ENCODE measurements at regions of chr15 and their contacts with region 1.

Region 1: GRCh38 chr15:45634442-45635190 is at the start of gene SQOR:
- DNase-seq: peak; percentile 89 to 95
- H3K4me3 ChIP-seq: peak within 1 kb of the TSS; percentile 70 to 86
- H3K27ac ChIP-seq: peak within 1 kb of the TSS; percentile 93 to 96
- H3K4me1 ChIP-seq: peaks cover 5 to 54% (median 32%) of the 10 kb centered on the region in 4 donors
- H3K27me3 ChIP-seq: no peaks in the 10 kb centered on the region
- CTCF ChIP-seq: no peak

Region 2: DNA sequence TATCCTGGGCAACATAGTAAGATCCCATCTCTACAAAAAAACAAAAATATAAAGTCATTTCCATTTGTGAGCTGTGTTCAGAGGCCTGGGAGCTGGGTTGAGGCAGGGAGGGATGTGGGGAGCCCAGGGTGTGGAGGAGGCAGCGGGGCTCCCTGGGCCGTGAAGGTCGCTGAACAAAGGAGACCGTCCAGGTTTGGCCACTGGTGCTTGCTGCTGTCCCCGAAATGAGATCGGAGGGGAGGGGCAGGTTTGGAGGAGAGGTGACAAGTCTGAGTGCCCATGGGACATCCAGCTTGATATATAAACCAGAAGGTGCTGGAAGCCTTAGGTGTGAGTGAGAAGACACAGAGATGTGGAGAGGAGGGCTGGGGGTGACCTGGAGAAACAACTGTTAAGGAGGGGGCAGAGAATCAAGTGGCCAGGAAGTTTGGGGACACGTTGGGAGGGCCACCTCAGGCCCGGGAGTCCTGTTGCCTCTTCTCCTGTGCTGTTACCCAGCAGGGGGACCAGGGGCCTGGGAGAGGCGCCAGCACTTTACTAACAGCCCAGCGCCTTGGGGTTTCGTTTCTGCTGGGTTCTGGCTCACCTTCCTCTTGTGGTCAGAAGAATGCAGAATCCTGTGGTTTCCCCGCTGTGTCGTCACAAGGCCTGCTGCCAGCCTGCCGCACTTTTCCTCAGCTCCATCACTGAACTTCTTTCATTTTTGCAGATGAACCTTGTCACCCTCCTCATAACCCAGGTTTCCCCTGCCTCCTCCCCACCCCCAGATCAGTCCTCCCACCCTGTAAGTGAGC is 180.0 kb before region 1 on chr15:
- intact Hi-C with region 1: no loop called
- DNase-seq: peak in 1 of 2 donors; percentile 44
- H3K4me3 ChIP-seq: no peak overlapping the region
- H3K27ac ChIP-seq: no peak overlapping the region
- H3K4me1 ChIP-seq: peaks cover 0 to 18% (median 0%) of the 10 kb centered on the region in 4 donors
- H3K27me3 ChIP-seq: peaks cover 0 to 6% of the 10 kb centered on the region in 2 donors
- CTCF ChIP-seq: no peak

Region 3: GRCh38 chr15:45587095-45587860 is 47.3 kb before region 1 on chr15 and contains the start of gene BLOC1S6:
- intact Hi-C with region 1: loop called (anchors 5 kb)
- DNase-seq: peak; percentile 86 to 93
- H3K4me3 ChIP-seq: peak within 1 kb of the TSS; percentile 72 to 75
- H3K27ac ChIP-seq: peak within 1 kb of the TSS; percentile 92 to 96
- H3K4me1 ChIP-seq: peaks cover 0 to 45% (median 24%) of the 10 kb centered on the region in 4 donors
- H3K27me3 ChIP-seq: no peaks in the 10 kb centered on the region
- CTCF ChIP-seq: no peak

Measured in tibial artery (tissue), 4 donors.